WTC11 (cell line): ENCODE measurements at regions of chr3 and their contacts with region 1.

Region 1: GRCh38 chr3:50652709-50653108 is 22.0 kb upstream of the DOCK3 start:
- DNase-seq: peak; percentile 70
- ATAC-seq: peak; percentile 73
- H3K4me3 Mint-ChIP-seq: no peak overlapping the region
- H3K27ac Mint-ChIP-seq: no peak overlapping the region
- H3K4me1 Mint-ChIP-seq: peaks cover 26% of the 10 kb centered on the region
- H3K27me3 Mint-ChIP-seq: peaks cover 3% of the 10 kb centered on the region; the same call in 1 of the 2 replicates
- CTCF ChIP-seq: peak; percentile 24

Region 2: GRCh38 chr3:50627407-50628051 is 25.2 kb before region 1 on chr3:
- CTCF ChIA-PET with region 1: interaction called, 110 read pairs
- POLR2A ChIA-PET with region 1: interaction called, 3 read pairs
- DNase-seq: peak; percentile 66
- ATAC-seq: peak; percentile 93
- H3K4me3 Mint-ChIP-seq: no peak overlapping the region
- H3K27ac Mint-ChIP-seq: no peak overlapping the region
- H3K4me1 Mint-ChIP-seq: peaks cover 38% of the 10 kb centered on the region
- H3K27me3 Mint-ChIP-seq: no peaks in the 10 kb centered on the region
- CTCF ChIP-seq: no peak

Region 3: GRCh38 chr3:50639055-50639494 is 13.6 kb before region 1 on chr3:
- CTCF ChIA-PET with region 1: interaction called, 110 read pairs
- POLR2A ChIA-PET with region 1: no interaction called
- DNase-seq: no peak
- ATAC-seq: no peak
- H3K4me3 Mint-ChIP-seq: no peak overlapping the region
- H3K27ac Mint-ChIP-seq: no peak overlapping the region
- H3K4me1 Mint-ChIP-seq: peaks cover 38% of the 10 kb centered on the region
- H3K27me3 Mint-ChIP-seq: no peaks in the 10 kb centered on the region
- CTCF ChIP-seq: no peak

Region 4: GRCh38 chr3:50666837-50667236 is 14.1 kb after region 1 on chr3:
- CTCF ChIA-PET with region 1: interaction called, 16 read pairs
- POLR2A ChIA-PET with region 1: no interaction called
- DNase-seq: no peak
- ATAC-seq: no peak; the same call in 1 of the 2 replicates
- H3K4me3 Mint-ChIP-seq: no peak overlapping the region
- H3K27ac Mint-ChIP-seq: no peak overlapping the region
- H3K4me1 Mint-ChIP-seq: peaks cover 10% of the 10 kb centered on the region
- H3K27me3 Mint-ChIP-seq: peaks cover 9% of the 10 kb centered on the region
- CTCF ChIP-seq: no peak

Region 5: DNA sequence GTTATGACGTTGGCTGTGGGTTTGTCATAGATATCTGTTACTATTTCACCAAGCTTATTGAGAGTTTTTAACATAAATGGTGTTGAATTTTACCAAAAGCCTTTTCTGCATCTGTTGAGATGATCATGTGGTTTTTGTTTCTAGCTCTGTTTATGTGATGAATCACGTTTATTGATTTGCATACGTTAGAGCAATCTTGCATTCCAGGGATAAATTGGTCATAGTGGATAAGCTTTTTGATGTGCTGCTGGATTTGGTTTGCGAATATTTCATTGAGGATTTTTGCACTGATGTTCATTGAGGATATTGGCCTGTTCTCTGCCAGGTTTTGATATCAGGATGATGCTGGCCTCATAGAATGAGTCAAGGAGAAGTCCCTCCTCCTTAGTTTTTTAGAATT is 139.9 kb after region 1 on chr3:
- CTCF ChIA-PET with region 1: no interaction called
- POLR2A ChIA-PET with region 1: no interaction called
- DNase-seq: no peak
- ATAC-seq: no peak
- H3K4me3 Mint-ChIP-seq: no peak overlapping the region
- H3K27ac Mint-ChIP-seq: no peak overlapping the region
- H3K4me1 Mint-ChIP-seq: peaks cover 41% of the 10 kb centered on the region
- H3K27me3 Mint-ChIP-seq: no peaks in the 10 kb centered on the region
- CTCF ChIP-seq: no peak

Region 6: DNA sequence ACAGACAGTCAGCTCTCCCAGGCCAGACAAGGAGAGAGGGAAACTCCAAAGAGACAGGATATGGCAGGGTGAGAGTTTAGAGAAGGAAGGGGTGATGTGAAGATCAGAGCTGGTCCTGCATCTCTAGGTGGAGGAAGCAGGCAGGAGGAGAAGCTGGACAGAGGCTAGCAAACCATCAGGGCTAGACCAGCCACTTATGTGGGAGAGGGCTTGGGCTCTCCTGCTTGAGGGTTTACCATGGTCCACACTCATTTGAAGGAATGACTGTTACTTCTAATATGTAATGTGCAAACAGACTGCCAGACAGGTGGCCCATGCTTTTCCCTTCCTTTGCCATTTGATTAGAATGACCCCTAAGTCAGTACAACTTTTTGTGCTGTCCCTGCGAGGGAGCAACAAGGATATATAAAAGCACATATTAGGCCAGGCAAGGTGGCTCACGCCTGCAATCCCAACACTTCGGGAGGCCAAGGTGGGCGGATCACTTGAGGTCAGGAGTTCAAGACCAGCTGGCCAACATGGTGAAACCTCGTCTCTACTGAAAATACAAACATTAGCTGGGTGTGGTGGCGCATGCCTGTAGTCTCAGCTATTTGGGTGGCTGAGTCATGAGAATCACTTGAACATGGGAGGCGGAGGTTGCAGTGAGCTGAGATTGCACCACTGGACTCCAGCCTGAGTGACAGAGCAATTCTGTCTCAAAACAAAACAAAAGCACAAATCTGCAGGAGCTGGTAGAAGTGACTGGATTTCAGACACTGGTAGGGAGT is 691.4 kb after region 1 on chr3:
- CTCF ChIA-PET with region 1: no interaction called
- POLR2A ChIA-PET with region 1: no interaction called
- DNase-seq: no peak
- ATAC-seq: no peak
- H3K4me3 Mint-ChIP-seq: no peak overlapping the region
- H3K27ac Mint-ChIP-seq: no peak overlapping the region
- H3K4me1 Mint-ChIP-seq: peaks cover 8% of the 10 kb centered on the region
- H3K27me3 Mint-ChIP-seq: no peaks in the 10 kb centered on the region; the same call in 1 of the 2 replicates
- CTCF ChIP-seq: no peak

Region 7: GRCh38 chr3:51371943-51372557 is 719.3 kb after region 1 on chr3:
- CTCF ChIA-PET with region 1: interaction called, 11 read pairs
- POLR2A ChIA-PET with region 1: no interaction called
- DNase-seq: peak; percentile 67
- ATAC-seq: peak; percentile 89
- H3K4me3 Mint-ChIP-seq: no peak overlapping the region
- H3K27ac Mint-ChIP-seq: no peak overlapping the region
- H3K4me1 Mint-ChIP-seq: no peaks in the 10 kb centered on the region
- H3K27me3 Mint-ChIP-seq: no peaks in the 10 kb centered on the region
- CTCF ChIP-seq: peak; percentile 25; the same call in 1 of the 2 replicates